ENCODE measurements at regions of chr15 and their contacts with region 1.

Region 1: DNA sequence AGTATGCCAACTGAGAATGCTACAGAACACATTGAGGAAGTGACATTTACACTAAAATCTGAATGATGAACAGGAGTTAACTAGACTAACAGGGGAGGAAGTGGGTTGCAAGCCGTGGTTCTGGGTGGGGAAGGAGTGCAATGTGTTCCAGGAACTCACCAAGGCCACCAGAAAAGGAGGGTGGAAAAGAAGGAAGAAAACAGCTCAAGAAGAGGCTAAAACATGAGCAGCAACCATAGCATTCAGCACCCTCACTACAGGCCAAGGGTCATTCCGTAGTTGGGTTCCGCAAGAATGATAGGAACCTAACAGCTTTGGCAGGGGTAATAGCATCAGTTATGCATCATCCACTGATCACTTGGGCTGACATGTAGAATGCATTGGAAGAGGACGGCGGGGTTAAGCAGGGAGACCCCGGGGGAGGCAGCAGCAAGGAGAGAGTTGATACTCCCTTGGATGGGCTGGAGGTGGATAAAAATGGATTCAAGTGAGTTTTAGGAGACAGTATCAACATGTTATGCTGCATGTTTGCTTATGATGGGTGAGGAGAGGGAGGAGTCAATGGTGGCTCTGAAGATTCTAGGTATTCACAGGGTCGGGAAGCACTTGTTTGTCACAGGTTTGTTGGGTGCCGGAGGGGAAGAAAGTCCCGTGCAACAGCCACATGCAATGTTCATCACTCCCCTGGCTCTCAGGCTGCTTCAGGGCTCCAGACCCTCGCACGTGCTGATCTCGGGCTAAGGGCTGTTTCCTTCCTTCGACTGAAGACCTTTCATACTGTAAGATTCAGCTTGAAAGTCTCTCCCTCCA is 53.2 kb downstream of the LIPC start:
- DNase-seq: no peak
- H3K4me3 ChIP-seq: no peak overlapping the region
- H3K27ac ChIP-seq: no peak overlapping the region
- H3K4me1 ChIP-seq: no peaks in the 10 kb centered on the region
- H3K27me3 ChIP-seq: no peaks in the 10 kb centered on the region
- CTCF ChIP-seq: no peak
- POLR2A ChIP-seq: no peak

Region 2: DNA sequence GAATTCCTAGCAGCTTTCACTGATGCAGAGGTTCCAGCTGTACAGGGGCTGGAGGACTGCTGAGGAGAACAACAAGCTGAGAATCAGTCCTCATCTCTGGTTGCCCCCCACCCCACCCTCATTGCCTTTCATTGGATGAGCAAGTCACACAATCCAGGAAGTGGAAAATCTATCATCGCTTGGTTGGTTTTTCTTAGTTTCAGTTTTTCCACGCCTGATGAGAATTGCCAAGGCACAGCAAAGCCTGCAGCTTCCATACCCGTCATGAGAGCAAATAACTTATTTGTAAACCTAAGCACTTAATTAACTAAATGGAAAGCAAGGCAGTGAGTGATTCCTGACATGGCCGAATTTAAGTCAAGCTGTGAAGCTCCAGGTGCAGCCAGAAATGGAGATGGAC is 74.6 kb before region 1 on chr15:
- intact Hi-C with region 1: loop called (anchors 10 kb)
- DNase-seq: no peak
- H3K4me3 ChIP-seq: no peak overlapping the region
- H3K27ac ChIP-seq: no peak overlapping the region
- H3K4me1 ChIP-seq: no peaks in the 10 kb centered on the region
- H3K27me3 ChIP-seq: no peaks in the 10 kb centered on the region
- CTCF ChIP-seq: no peak
- POLR2A ChIP-seq: no peak

Measured in prostate gland (tissue), 2 donors.